ENCODE measurements at regions of chr1 and their contacts with region 1.

Region 1: DNA sequence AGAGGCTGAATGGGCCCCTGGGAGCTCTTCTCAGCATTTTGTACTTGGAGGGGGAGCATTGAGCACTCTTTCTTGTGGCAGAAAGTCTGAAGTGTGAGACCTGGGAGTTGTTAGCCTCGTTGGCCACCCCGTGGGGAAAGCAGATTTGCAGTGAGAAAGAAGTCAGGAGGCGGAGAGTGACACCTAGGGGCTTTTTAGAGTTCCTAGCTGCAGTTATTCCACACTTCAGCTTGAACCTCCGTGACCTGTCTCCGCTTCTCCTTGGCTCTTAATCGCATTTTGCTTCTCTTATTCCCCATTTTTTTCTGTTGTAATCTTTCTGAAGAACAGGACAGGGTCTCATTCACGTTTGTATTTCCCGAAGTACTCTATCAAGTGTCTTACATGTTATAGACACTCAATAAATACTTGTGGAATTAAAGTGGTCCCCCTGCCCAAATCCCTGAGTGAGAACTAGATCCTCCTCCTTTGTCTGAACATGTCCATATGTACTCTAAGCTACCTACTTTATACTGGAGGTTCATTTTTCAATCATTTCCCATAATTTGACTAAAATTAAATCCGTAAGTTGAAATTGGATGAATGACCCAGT is 14.5 kb upstream of the C1orf141 start:
- DNase-seq: peak; percentile 35 to 85 (median 67)
- ATAC-seq: peak; percentile 94 to 96
- H3K4me3 Mint-ChIP-seq: peak overlapping the region in 1 of 10 donors; percentile 54
- H3K27ac Mint-ChIP-seq: peak overlapping the region in 5 of 10 donors; percentile 18 to 66 (median 36)
- H3K4me1 Mint-ChIP-seq: peaks cover 14 to 35% (median 26%) of the 10 kb centered on the region in 4 donors
- H3K27me3 Mint-ChIP-seq: peaks cover 0 to 24% (median 9%) of the 10 kb centered on the region in 5 donors

Region 2: GRCh38 chr1:66996018-66996682 is 153.1 kb before region 1 on chr1:
- POLR2A ChIA-PET with region 1: interaction called, 17 read pairs
- DNase-seq: peak in 9 of 10 donors; percentile 19 to 78 (median 58)
- ATAC-seq: peak; percentile 82 to 91
- H3K4me3 Mint-ChIP-seq: no peak overlapping the region
- H3K27ac Mint-ChIP-seq: peak overlapping the region in 7 of 10 donors; percentile 1 to 61 (median 24)
- H3K4me1 Mint-ChIP-seq: peaks cover 11 to 22% (median 19%) of the 10 kb centered on the region in 4 donors
- H3K27me3 Mint-ChIP-seq: no peaks in the 10 kb centered on the region

Region 3: DNA sequence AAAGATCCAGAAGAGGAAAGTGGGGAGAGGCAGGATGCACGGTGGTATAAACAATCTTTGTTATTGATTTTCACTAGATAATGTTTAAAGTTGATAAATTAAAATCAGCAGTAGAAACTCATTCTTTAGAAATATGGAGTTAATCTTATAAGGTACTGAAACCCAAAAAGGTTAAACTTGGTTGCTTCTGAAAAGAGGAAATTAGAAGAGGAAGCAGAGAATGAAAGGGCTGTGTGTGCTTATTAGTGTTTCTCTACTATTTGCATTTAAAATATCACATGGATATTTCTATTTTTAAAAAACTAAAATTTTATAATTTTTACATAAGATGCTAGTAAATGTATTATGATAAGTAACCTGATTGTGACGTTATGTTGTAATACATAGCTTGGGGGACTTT is 38.9 kb before region 1 on chr1:
- POLR2A ChIA-PET with region 1: no interaction called
- DNase-seq: no peak
- ATAC-seq: no peak
- H3K4me3 Mint-ChIP-seq: no peak overlapping the region
- H3K27ac Mint-ChIP-seq: no peak overlapping the region
- H3K4me1 Mint-ChIP-seq: peaks cover 0 to 19% (median 0%) of the 10 kb centered on the region in 4 donors
- H3K27me3 Mint-ChIP-seq: peaks cover 0 to 1% (median 0%) of the 10 kb centered on the region in 5 donors

Region 4: GRCh38 chr1:67162957-67163356 is 13.7 kb after region 1 on chr1:
- POLR2A ChIA-PET with region 1: no interaction called
- DNase-seq: no peak
- ATAC-seq: no peak
- H3K4me3 Mint-ChIP-seq: no peak overlapping the region
- H3K27ac Mint-ChIP-seq: peak overlapping the region in 1 of 10 donors; percentile 2
- H3K4me1 Mint-ChIP-seq: peaks cover 7 to 12% (median 9%) of the 10 kb centered on the region in 4 donors
- H3K27me3 Mint-ChIP-seq: peaks cover 0 to 31% (median 4%) of the 10 kb centered on the region in 5 donors